AG04450 (cell line): ENCODE measurements at regions of chr4 and their contacts with region 1.

Region 1: GRCh38 chr4:2220016-2220630 is 21.8 kb downstream of the HAUS3 start:
- DNase-seq: peak; percentile 30
- H3K4me3 ChIP-seq: no peak overlapping the region
- H3K27ac ChIP-seq: no peak overlapping the region
- H3K27me3 ChIP-seq: no peaks in the 10 kb centered on the region
- CTCF ChIP-seq: peak; percentile 98

Region 2: GRCh38 chr4:2231082-2231481 is 11.0 kb after region 1 on chr4:
- CTCF ChIA-PET with region 1: interaction called, 18 read pairs
- POLR2A ChIA-PET with region 1: no interaction called
- DNase-seq: no peak
- H3K4me3 ChIP-seq: no peak overlapping the region
- H3K27ac ChIP-seq: no peak overlapping the region
- H3K27me3 ChIP-seq: no peaks in the 10 kb centered on the region
- CTCF ChIP-seq: no peak

Region 3: GRCh38 chr4:2241410-2242353 is 21.6 kb after region 1 on chr4 and contains the starts of genes HAUS3 and POLN:
- CTCF ChIA-PET with region 1: interaction called, 17 read pairs
- POLR2A ChIA-PET with region 1: interaction called, 4 read pairs
- DNase-seq: peak; percentile 94
- H3K4me3 ChIP-seq: peak within 1 kb of the TSS; percentile 89
- H3K27ac ChIP-seq: no peak within 1 kb of the TSS
- H3K27me3 ChIP-seq: no peaks in the 10 kb centered on the region
- CTCF ChIP-seq: no peak
- polyA plus RNA-seq, gene HAUS3: 3.1 and 6.0 TPM in 2 replicates
- polyA plus RNA-seq, gene POLN: 0.35 and 0.42 TPM in 2 replicates

Region 4: GRCh38 chr4:2354118-2354517 is 134.0 kb after region 1 on chr4:
- CTCF ChIA-PET with region 1: interaction called, 24 read pairs
- POLR2A ChIA-PET with region 1: no interaction called
- DNase-seq: no peak
- H3K4me3 ChIP-seq: no peak overlapping the region
- H3K27ac ChIP-seq: no peak overlapping the region
- H3K27me3 ChIP-seq: peaks cover 7% of the 10 kb centered on the region
- CTCF ChIP-seq: peak; percentile 58

Region 5: GRCh38 chr4:2441393-2442174 is 221.5 kb after region 1 on chr4:
- CTCF ChIA-PET with region 1: interaction called, 17 read pairs
- POLR2A ChIA-PET with region 1: no interaction called
- DNase-seq: no peak
- H3K4me3 ChIP-seq: no peak overlapping the region
- H3K27ac ChIP-seq: no peak overlapping the region
- H3K27me3 ChIP-seq: peaks cover 2% of the 10 kb centered on the region
- CTCF ChIP-seq: peak; percentile 67

Region 6: GRCh38 chr4:2462218-2462991 is 242.3 kb after region 1 on chr4:
- CTCF ChIA-PET with region 1: interaction called, 11 read pairs
- POLR2A ChIA-PET with region 1: no interaction called
- DNase-seq: peak; percentile 27
- H3K4me3 ChIP-seq: peak overlapping the region; percentile 43
- H3K27ac ChIP-seq: peak overlapping the region; percentile 11
- H3K27me3 ChIP-seq: peaks cover 7% of the 10 kb centered on the region
- CTCF ChIP-seq: peak; percentile 42